ENCODE measurements at regions of chr1 and their contacts with region 1.

Region 1: GRCh38 chr1:230648114-230648513 is 5.8 kb downstream of the COG2 start:
- DNase-seq: no peak
- H3K4me3 ChIP-seq: no peak overlapping the region
- H3K27ac ChIP-seq: no peak overlapping the region
- H3K4me1 ChIP-seq: peaks cover 8% of the 10 kb centered on the region
- H3K27me3 ChIP-seq: no peaks in the 10 kb centered on the region
- CTCF ChIP-seq: no peak
- POLR2A ChIP-seq: no peak

Region 2: GRCh38 chr1:228655796-228656394 is 1992.2 kb before region 1 on chr1:
- CTCF ChIA-PET with region 1: no interaction called
- POLR2A ChIA-PET with region 1: no interaction called
- dilution Hi-C with region 1: no loop called
- intact Hi-C with region 1: loop called (anchors 5 kb)
- DNase-seq: no peak
- H3K4me3 ChIP-seq: no peak overlapping the region
- H3K27ac ChIP-seq: no peak overlapping the region
- H3K4me1 ChIP-seq: no peaks in the 10 kb centered on the region
- H3K27me3 ChIP-seq: peaks cover 0 to 10% of the 10 kb centered on the region in 2 experiments
- CTCF ChIP-seq: no peak
- POLR2A ChIP-seq: no peak

Region 3: DNA sequence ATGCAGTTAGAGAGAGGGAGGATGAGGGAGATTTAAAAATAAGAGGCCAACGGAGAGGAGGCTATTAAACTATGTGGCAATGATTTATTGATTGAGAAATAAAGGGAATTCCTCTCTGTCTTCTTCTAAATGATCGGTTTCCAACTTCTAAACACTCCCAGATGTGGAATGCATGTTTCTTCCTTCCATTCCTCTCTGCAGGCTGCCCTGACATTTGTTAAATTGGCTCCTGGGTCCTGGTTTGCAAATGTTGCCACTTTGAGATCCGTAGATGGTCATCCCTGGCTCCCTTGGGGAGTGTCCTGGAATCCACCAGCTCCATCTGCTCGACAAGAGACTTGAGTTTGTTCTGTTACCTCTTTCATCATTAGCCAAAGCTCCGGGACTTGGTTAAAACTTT is 230.5 kb after region 1 on chr1:
- CTCF ChIA-PET with region 1: no interaction called
- POLR2A ChIA-PET with region 1: no interaction called
- dilution Hi-C with region 1: no loop called
- intact Hi-C with region 1: no loop called
- DNase-seq: no peak
- H3K4me3 ChIP-seq: no peak overlapping the region
- H3K27ac ChIP-seq: no peak overlapping the region
- H3K4me1 ChIP-seq: no peaks in the 10 kb centered on the region
- H3K27me3 ChIP-seq: peaks cover 4 to 7% of the 10 kb centered on the region in 2 experiments
- CTCF ChIP-seq: no peak
- POLR2A ChIP-seq: no peak

Measured in endothelial cell of umbilical vein (primary cell).